SK-N-SH (cell line): ENCODE measurements at regions of chr6 and their contacts with region 1.

Region 1: GRCh38 chr6:11496152-11497060 is 41.1 kb upstream of the TMEM170B start:
- DNase-seq: peak; percentile 70
- H3K4me3 ChIP-seq: no peak overlapping the region; a peak in 1 of 4 replicates
- H3K27ac ChIP-seq: peak overlapping the region; percentile 45 to 91
- H3K4me1 ChIP-seq: peaks cover 4 to 24% of the 10 kb centered on the region in 2 experiments; a peak in 3 of 4 replicates
- H3K27me3 ChIP-seq: no peaks in the 10 kb centered on the region
- CTCF ChIP-seq: peak; percentile 96
- EP300 ChIP-seq: peak in 1 of 2 experiments; percentile 61; a peak in 1 of 4 replicates
- RAD21 ChIP-seq: peak; percentile 98

Region 2: DNA sequence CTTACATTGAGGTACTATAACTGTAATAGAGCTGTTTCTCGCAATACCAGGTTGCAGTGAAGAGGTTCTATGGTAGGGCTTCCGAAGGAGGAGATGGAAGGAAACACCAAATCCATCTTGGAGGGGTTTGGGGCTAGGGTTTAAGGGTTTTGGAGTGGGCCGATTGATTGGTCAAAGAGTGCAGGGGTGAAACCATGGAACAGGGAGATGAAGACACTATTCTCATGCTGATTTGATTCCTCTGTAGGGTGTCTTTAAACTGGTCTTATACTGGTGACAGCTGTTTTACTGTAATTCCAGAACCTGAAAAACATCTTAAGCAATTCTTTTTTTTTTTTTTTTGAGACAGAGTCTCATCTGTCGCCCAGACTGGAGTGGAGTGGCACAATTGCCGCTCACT is 395.0 kb before region 1 on chr6:
- CTCF ChIA-PET with region 1: interaction called, 16 read pairs
- POLR2A ChIA-PET with region 1: no interaction called
- DNase-seq: no peak
- H3K4me3 ChIP-seq: no peak overlapping the region
- H3K27ac ChIP-seq: no peak overlapping the region
- H3K4me1 ChIP-seq: peaks cover 0 to under 1% of the 10 kb centered on the region in 2 experiments; a peak in 2 of 4 replicates
- H3K27me3 ChIP-seq: no peaks in the 10 kb centered on the region
- CTCF ChIP-seq: no peak
- EP300 ChIP-seq: no peak
- RAD21 ChIP-seq: no peak

Region 3: DNA sequence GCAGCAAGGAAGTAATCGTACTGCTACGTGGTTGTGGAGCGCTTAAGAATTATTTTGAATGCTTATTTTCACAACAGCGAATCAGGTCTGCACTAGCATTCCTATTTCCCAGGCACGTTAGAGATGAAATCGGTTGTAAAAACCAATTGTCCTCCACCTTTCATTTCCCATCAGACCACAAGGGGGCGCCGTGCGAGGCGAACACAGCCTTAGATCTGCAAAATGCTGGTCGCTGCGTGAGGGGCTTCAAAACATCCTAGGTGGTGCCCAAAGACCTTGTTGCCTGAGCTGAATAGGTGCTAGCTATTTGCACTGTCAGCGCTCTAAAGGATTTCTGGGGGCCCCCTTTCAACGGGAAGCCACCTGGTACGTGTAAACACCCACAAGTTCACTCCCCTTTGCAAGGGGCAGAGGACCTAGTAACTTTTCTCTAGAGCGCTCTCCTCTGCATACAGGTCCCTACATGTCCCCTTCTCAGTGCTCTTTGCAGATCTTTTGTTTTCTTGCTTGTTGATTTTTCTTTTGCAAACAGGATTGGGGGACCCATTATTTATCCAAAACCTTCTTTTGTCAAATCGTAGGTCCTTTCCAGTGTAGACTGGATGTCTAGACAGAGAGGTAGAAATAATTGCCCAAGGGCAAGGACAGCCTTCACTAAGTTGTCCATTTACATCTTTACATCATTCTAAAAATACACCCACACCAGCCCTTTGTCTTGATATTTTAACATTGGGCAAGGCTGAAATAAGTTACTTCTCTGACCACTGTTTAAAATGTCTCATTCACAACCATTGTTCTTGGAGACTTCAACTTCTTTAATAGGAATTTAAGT is 323.7 kb before region 1 on chr6:
- CTCF ChIA-PET with region 1: interaction called, 69 read pairs
- POLR2A ChIA-PET with region 1: interaction called, 3 read pairs
- DNase-seq: peak; percentile 63
- H3K4me3 ChIP-seq: peak overlapping the region in 1 of 2 experiments; percentile 31; a peak in 1 of 4 replicates
- H3K27ac ChIP-seq: peak overlapping the region in 1 of 2 experiments; percentile 1; a peak in 1 of 4 replicates
- H3K4me1 ChIP-seq: peaks cover 0 to 8% of the 10 kb centered on the region in 2 experiments; a peak in 1 of 4 replicates
- H3K27me3 ChIP-seq: no peaks in the 10 kb centered on the region
- CTCF ChIP-seq: peak; percentile 80
- EP300 ChIP-seq: no peak
- RAD21 ChIP-seq: peak; percentile 71

Region 4: GRCh38 chr6:11232193-11232769 is 264.1 kb before region 1 on chr6 and contains the start of gene NEDD9:
- CTCF ChIA-PET with region 1: interaction called, 19 read pairs
- POLR2A ChIA-PET with region 1: interaction called, 4 read pairs
- DNase-seq: peak; percentile 90
- H3K4me3 ChIP-seq: peak within 1 kb of the TSS; percentile 75 to 91
- H3K27ac ChIP-seq: peak within 1 kb of the TSS; percentile 89 to 90
- H3K4me1 ChIP-seq: peaks cover 27 to 29% of the 10 kb centered on the region in 2 experiments
- H3K27me3 ChIP-seq: no peaks in the 10 kb centered on the region
- CTCF ChIP-seq: peak; percentile 12; the same call in 1 of the 2 replicates
- EP300 ChIP-seq: no peak
- RAD21 ChIP-seq: peak; percentile 17; the same call in 1 of the 2 replicates
- polyA plus RNA-seq, gene NEDD9: 7.4 and 9.9 TPM in 2 replicates

Region 5: DNA sequence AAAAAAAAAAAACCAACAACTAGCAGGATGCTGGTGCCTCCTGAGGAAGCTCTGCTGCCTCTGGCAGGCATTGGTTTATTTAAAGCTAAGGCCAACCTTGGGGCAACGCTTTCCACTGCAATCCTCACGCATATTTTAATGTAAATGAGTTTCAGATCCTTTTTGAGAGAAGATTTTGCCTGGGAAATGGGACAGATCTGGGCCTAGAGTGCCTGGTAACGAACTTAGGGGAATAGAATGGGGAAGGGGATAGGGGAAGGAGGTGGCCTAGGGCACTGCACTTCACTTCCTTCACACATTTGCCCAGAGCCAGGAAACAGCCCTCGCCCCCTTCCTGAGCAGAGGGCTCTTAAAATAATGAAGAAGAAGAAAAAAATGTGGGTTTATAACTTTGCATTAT is 91.6 kb before region 1 on chr6:
- CTCF ChIA-PET with region 1: interaction called, 10 read pairs
- POLR2A ChIA-PET with region 1: no interaction called
- DNase-seq: no peak
- H3K4me3 ChIP-seq: no peak overlapping the region
- H3K27ac ChIP-seq: peak overlapping the region in 1 of 2 experiments; percentile 14; a peak in 1 of 4 replicates
- H3K4me1 ChIP-seq: no peaks in the 10 kb centered on the region; a peak in 1 of 4 replicates
- H3K27me3 ChIP-seq: no peaks in the 10 kb centered on the region
- CTCF ChIP-seq: no peak
- EP300 ChIP-seq: no peak
- RAD21 ChIP-seq: no peak

Region 6: DNA sequence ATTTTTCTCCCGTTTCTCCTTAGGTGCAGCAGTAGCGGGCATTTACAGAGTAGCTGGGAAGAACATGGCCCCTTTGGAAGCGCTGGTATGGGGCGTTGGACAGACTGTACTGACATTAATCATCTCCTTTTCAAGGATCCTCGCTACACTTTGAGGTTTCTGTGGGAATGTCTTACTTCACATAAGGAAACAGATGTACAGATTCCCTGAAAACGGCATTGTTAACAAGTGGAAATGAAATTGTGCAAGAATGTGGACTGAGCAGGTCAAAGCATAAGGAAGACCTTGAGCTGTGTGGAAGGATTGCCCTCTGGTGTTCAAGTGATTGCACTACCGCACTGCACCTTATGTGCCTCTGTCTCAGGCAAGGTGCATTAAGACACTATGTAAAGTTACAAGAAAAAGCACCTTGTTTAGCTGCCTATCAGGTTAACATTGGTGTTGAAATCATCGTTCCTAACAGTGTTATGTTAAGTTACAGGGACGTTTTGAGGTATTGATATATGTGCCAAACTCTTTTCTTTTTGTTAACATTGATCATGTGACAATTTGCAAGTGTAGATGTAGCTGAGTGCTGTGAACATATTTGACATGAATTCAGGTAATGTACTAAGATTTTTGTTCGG is 79.1 kb after region 1 on chr6:
- CTCF ChIA-PET with region 1: interaction called, 72 read pairs
- POLR2A ChIA-PET with region 1: interaction called, 3 read pairs
- DNase-seq: peak; percentile 46
- H3K4me3 ChIP-seq: no peak overlapping the region
- H3K27ac ChIP-seq: no peak overlapping the region; a peak in 1 of 4 replicates
- H3K4me1 ChIP-seq: peaks cover 0 to 3% of the 10 kb centered on the region in 2 experiments; a peak in 2 of 4 replicates
- H3K27me3 ChIP-seq: no peaks in the 10 kb centered on the region
- CTCF ChIP-seq: peak; percentile 93
- EP300 ChIP-seq: no peak
- RAD21 ChIP-seq: peak; percentile 92

Region 7: GRCh38 chr6:12008366-12009179 is 512.2 kb after region 1 on chr6:
- CTCF ChIA-PET with region 1: no interaction called
- POLR2A ChIA-PET with region 1: no interaction called
- DNase-seq: peak; percentile 89
- H3K4me3 ChIP-seq: peak overlapping the region; percentile 62 to 95
- H3K27ac ChIP-seq: peak overlapping the region; percentile 99
- H3K4me1 ChIP-seq: peaks cover under 1 to 9% of the 10 kb centered on the region in 2 experiments; a peak in 3 of 4 replicates
- H3K27me3 ChIP-seq: no peaks in the 10 kb centered on the region
- CTCF ChIP-seq: no peak
- EP300 ChIP-seq: peak in 1 of 2 experiments; percentile 7; a peak in 1 of 4 replicates
- RAD21 ChIP-seq: no peak